ENCODE measurements at regions of chr12 and their contacts with region 1.

Region 1: GRCh38 chr12:3275171-3276041 is 198.2 kb downstream of the TSPAN9 start:
- DNase-seq: peak; percentile 91
- H3K4me3 ChIP-seq: no peak overlapping the region; a peak in 1 of 4 replicates
- H3K27ac ChIP-seq: no peak overlapping the region
- H3K4me1 ChIP-seq: peaks cover 0 to 2% of the 10 kb centered on the region in 2 experiments; a peak in 1 of 4 replicates
- H3K27me3 ChIP-seq: no peaks in the 10 kb centered on the region
- CTCF ChIP-seq: peak; percentile 97
- EP300 ChIP-seq: no peak
- RAD21 ChIP-seq: peak; percentile 98

Region 2: DNA sequence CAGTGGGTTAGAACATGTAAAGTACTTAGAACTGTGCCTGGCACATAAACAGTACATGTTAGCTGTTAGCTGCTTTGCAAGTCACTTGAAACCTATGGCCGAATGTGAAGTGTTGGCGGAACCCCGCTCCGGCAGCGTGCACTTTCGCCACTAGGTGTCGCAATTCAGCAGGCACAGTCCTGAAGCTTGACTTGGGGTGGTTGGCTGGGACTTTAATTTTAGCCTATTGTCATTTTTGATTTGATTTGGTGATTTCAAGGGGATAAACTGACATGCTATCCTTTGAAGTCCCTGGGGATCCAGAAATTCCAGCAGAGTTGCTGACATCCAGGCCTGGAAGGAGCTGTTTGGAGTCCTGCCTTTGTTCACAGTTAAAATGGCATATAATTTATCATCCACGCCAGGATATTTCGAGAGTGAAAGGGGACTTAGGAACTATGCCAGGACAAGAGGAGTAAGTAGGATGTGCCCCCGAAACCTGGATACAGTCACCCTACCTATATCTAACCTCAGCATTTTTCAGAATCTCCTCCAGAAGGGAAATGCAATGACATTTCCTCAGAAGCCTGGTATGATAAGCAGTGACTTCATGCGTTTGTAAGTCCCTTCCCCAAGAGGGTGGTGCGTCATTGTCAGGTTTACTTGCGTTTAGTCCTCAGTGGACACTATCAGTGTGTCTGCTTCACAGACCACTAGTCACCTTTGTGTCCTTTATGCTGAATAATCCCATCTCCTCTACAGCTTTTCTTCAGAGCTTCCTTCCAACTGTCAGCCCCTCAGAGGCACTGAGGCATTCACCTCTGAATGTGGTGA is 201.8 kb before region 1 on chr12:
- CTCF ChIA-PET with region 1: interaction called, 165 read pairs
- POLR2A ChIA-PET with region 1: no interaction called
- DNase-seq: peak; percentile 90
- H3K4me3 ChIP-seq: no peak overlapping the region; a peak in 1 of 4 replicates
- H3K27ac ChIP-seq: no peak overlapping the region
- H3K4me1 ChIP-seq: peaks cover 0 to 14% of the 10 kb centered on the region in 2 experiments; a peak in 2 of 4 replicates
- H3K27me3 ChIP-seq: no peaks in the 10 kb centered on the region
- CTCF ChIP-seq: peak; percentile 99
- EP300 ChIP-seq: no peak
- RAD21 ChIP-seq: peak; percentile 94

Region 3: DNA sequence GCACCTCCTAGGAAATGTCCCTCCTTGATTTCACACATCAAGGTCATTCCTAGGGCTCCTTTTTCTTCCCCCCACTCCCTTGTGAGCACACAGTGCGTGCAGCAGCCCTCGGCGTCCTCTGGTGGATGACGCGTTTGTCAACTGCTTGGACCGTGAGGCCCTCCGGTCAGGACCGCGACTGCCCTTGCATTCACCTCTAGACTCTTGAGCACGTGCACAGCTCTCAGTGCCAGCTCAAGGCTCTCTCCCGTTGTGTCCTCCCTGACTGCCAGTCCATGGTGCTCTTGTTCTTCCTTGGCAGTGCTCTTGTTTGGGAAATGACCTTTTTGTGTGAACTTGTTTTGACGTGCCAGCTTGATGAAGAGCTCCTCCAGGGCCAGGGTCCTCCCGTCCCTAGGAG is 130.4 kb before region 1 on chr12:
- CTCF ChIA-PET with region 1: interaction called, 368 read pairs
- POLR2A ChIA-PET with region 1: no interaction called
- DNase-seq: peak; percentile 10
- H3K4me3 ChIP-seq: no peak overlapping the region
- H3K27ac ChIP-seq: no peak overlapping the region
- H3K4me1 ChIP-seq: peaks cover 0 to 14% of the 10 kb centered on the region in 2 experiments; a peak in 1 of 4 replicates
- H3K27me3 ChIP-seq: no peaks in the 10 kb centered on the region
- CTCF ChIP-seq: no peak
- EP300 ChIP-seq: no peak
- RAD21 ChIP-seq: no peak

Region 4: DNA sequence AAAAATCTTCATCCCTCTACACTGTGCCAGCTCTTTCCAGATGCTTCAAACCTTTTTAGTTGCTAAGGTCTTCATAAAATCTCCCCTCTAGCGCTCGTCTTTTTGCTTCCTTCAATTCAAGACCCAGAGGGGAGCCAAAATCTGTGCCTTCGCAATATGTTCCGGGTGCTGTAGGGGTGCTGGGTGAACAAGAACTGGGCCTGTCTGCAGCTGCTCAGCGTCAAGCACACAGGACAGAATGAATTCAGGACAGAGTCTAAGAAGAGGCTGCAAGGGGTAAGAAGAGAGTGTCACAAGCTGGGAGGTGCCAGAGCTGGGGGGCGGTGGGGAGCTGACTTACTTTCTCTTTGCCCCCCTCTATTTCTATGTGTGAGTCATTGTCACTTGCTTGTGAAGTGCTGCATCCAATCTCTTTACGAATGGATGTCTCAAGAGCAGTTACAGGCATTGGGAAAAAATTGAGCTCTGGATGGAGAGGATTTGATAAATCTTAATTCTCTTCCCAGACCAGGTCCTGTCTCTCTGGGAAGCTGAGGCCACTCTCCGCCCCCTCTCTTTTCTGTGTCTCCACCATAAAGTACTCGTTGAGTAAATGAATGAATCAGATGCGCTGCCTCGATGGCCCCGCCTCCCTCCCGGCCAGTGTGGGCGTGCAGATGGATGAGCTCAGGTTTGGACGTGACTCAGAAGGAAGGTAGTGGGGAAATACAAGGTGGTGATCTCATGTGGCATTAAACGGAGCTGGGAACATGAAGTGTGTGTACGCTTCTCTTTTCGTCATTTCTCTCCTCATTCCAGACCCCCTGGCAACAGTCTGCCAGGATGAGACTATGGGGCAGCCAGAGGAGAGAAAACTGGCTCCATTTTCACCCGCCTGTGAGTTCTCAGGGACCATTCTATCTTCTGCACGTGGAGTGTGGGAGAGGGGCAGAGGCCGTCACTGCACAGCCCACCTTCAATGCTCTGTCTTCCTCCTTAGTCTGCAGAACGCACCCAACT is 106.9 kb before region 1 on chr12:
- CTCF ChIA-PET with region 1: interaction called, 11 read pairs
- POLR2A ChIA-PET with region 1: no interaction called
- DNase-seq: no peak
- H3K4me3 ChIP-seq: no peak overlapping the region
- H3K27ac ChIP-seq: peak overlapping the region in 1 of 2 experiments; percentile 95; a peak in 2 of 4 replicates
- H3K4me1 ChIP-seq: peaks cover 49 to 56% of the 10 kb centered on the region in 2 experiments
- H3K27me3 ChIP-seq: no peaks in the 10 kb centered on the region
- CTCF ChIP-seq: no peak
- EP300 ChIP-seq: peak in 1 of 2 experiments; percentile 39; a peak in 1 of 4 replicates
- RAD21 ChIP-seq: no peak

Region 5: DNA sequence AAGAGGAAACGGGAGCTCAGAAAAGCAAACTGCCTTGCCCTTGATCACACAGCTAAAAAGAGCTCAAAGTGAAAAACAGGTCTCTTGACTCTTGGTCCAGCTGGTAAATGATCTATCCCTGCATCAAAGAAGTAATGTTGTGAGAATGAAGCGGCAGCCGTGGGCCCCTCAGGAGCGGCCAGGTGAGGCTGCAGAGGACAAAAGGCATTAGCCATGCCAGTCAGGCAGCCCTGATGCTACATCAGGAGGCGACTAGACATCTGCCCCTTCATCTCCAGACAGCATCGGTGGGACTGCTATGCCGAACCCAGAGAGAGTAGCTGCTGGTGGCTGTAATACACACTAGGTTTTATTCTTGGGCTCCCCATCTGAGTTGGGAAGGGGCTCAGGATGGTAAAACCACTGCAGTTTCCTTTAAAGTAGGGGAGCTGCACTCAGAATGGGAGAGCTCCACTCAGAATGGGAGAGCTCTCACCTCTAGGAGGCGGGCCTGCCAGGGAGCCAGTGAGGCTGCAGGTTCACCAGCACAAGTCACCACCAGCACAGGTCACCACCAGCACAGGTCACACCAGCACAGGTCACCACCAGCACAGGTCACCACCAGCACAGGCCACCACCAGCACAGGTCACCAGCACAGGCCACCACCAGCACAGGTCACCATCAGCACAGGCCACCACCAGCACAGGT is 78.1 kb before region 1 on chr12:
- CTCF ChIA-PET with region 1: interaction called, 70 read pairs
- POLR2A ChIA-PET with region 1: no interaction called
- DNase-seq: no peak
- H3K4me3 ChIP-seq: no peak overlapping the region
- H3K27ac ChIP-seq: no peak overlapping the region
- H3K4me1 ChIP-seq: peaks cover 6 to 24% of the 10 kb centered on the region in 2 experiments; a peak in 2 of 4 replicates
- H3K27me3 ChIP-seq: no peaks in the 10 kb centered on the region
- CTCF ChIP-seq: no peak
- EP300 ChIP-seq: no peak
- RAD21 ChIP-seq: no peak

Region 6: GRCh38 chr12:3225154-3225795 is 50.1 kb before region 1 on chr12:
- CTCF ChIA-PET with region 1: interaction called, 17 read pairs
- POLR2A ChIA-PET with region 1: no interaction called
- DNase-seq: no peak
- H3K4me3 ChIP-seq: no peak overlapping the region
- H3K27ac ChIP-seq: peak overlapping the region in 1 of 2 experiments; percentile 91; a peak in 2 of 4 replicates
- H3K4me1 ChIP-seq: peaks cover 23 to 40% of the 10 kb centered on the region in 2 experiments; a peak in 3 of 4 replicates
- H3K27me3 ChIP-seq: no peaks in the 10 kb centered on the region
- CTCF ChIP-seq: no peak
- EP300 ChIP-seq: no peak
- RAD21 ChIP-seq: no peak

Region 7: GRCh38 chr12:3261782-3262359 is 13.5 kb before region 1 on chr12:
- CTCF ChIA-PET with region 1: interaction called, 32 read pairs
- POLR2A ChIA-PET with region 1: interaction called, 3 read pairs
- DNase-seq: no peak
- H3K4me3 ChIP-seq: no peak overlapping the region
- H3K27ac ChIP-seq: no peak overlapping the region
- H3K4me1 ChIP-seq: peaks cover 0 to 21% of the 10 kb centered on the region in 2 experiments; a peak in 2 of 4 replicates
- H3K27me3 ChIP-seq: no peaks in the 10 kb centered on the region
- CTCF ChIP-seq: no peak
- EP300 ChIP-seq: no peak
- RAD21 ChIP-seq: no peak

Region 8: DNA sequence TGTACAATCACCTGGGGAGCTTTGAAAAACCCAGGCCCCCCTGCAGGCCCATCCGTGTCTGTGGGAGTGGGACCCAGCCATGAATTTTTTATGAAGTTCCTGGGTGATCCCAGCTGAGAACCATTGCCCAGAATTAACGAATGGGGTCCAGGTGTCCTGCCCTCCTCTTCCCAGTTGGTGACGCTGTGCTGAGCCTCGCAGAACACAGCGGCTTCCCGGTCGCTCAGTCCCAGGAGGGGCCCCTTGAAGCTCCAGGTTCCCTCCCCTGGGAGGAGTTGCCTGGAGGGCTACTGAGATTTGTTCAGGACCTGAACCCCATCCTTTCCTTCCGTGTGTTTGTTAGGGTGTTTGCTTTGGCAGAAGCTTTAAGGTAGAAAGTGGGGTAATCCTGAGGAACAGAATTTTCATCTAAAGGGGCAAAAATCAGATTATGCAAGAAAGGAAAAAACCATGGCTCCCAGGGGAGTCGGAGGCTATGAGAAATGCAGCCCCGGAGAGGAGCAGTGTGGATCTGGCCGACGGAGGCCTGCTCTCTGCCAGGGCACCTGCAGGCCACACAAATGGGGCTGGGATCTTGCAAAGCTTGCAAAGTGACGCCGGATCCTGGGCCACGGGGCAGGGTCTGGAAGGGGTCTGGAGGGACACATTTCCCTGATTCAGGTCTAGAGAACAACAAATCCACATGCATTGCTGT is 50.9 kb after region 1 on chr12:
- CTCF ChIA-PET with region 1: no interaction called
- POLR2A ChIA-PET with region 1: no interaction called
- DNase-seq: no peak
- H3K4me3 ChIP-seq: no peak overlapping the region
- H3K27ac ChIP-seq: no peak overlapping the region
- H3K4me1 ChIP-seq: peaks cover 0 to 6% of the 10 kb centered on the region in 2 experiments; a peak in 1 of 4 replicates
- H3K27me3 ChIP-seq: peaks cover 11% of the 10 kb centered on the region
- CTCF ChIP-seq: no peak
- EP300 ChIP-seq: no peak
- RAD21 ChIP-seq: no peak

Region 9: GRCh38 chr12:3453990-3454675 is 178.7 kb after region 1 on chr12:
- CTCF ChIA-PET with region 1: no interaction called
- POLR2A ChIA-PET with region 1: no interaction called
- DNase-seq: no peak
- H3K4me3 ChIP-seq: no peak overlapping the region
- H3K27ac ChIP-seq: no peak overlapping the region
- H3K4me1 ChIP-seq: no peaks in the 10 kb centered on the region
- H3K27me3 ChIP-seq: no peaks in the 10 kb centered on the region
- CTCF ChIP-seq: no peak
- EP300 ChIP-seq: no peak
- RAD21 ChIP-seq: no peak

Region 10: GRCh38 chr12:4538207-4539160 is 1263.1 kb after region 1 on chr12 and contains the start of gene RAD51AP1:
- CTCF ChIA-PET with region 1: no interaction called
- POLR2A ChIA-PET with region 1: no interaction called
- DNase-seq: peak; percentile 91
- H3K4me3 ChIP-seq: peak within 1 kb of the TSS; percentile 92 to 99
- H3K27ac ChIP-seq: peak within 1 kb of the TSS; percentile 88 to 92
- H3K4me1 ChIP-seq: peaks cover 6 to 17% of the 10 kb centered on the region in 2 experiments
- H3K27me3 ChIP-seq: no peaks in the 10 kb centered on the region
- CTCF ChIP-seq: no peak
- EP300 ChIP-seq: peak; percentile 81 to 94
- RAD21 ChIP-seq: no peak
- polyA plus RNA-seq, gene RAD51AP1: 6.0 and 7.1 TPM in 2 replicates

Measured in SK-N-SH (cell line).